ENCODE measurements at regions of chr10 and their contacts with region 1.

Region 1: DNA sequence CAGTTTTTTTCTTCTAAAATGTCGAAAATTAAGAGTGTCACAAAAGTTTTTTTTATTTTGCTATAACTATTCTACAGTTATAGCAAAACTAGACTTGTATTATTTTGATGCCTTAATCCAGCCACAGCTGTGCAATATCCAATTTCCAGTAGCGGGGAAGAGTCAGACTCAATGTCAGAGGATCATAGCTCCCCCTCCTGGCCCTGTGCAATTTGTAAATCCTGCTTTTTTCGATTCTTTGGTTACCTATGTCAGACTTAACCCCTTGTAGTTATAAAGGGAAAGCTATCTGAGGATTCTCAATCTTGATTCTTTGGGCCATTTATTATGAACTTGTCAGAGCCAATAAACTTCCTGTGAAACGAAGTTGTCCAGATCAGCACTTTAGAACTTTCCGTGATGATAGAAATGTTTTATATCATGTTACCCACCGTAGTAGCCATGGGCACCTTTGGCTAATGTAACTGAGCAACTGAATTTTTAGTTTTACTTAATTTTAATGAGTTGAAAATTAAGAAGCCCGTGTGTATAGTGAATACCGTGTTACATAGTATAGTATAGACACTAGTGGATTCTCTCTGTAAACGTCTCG is 87.7 kb upstream of the PRKCQ start:
- DNase-seq: peak; percentile 27 to 57 (median 41)
- ATAC-seq: peak; percentile 86
- H3K4me3 ChIP-seq: no peak overlapping the region
- H3K27ac ChIP-seq: no peak overlapping the region
- H3K4me1 ChIP-seq: no peaks in the 10 kb centered on the region
- H3K27me3 ChIP-seq: peaks cover 0 to 4% of the 10 kb centered on the region in 2 experiments; a peak in 3 of 5 replicates
- CTCF ChIP-seq: peak; percentile 68 to 77 (median 71)
- EP300 ChIP-seq: no peak
- POLR2A ChIP-seq: no peak
- RAD21 ChIP-seq: peak; percentile 76 to 86

Region 2: DNA sequence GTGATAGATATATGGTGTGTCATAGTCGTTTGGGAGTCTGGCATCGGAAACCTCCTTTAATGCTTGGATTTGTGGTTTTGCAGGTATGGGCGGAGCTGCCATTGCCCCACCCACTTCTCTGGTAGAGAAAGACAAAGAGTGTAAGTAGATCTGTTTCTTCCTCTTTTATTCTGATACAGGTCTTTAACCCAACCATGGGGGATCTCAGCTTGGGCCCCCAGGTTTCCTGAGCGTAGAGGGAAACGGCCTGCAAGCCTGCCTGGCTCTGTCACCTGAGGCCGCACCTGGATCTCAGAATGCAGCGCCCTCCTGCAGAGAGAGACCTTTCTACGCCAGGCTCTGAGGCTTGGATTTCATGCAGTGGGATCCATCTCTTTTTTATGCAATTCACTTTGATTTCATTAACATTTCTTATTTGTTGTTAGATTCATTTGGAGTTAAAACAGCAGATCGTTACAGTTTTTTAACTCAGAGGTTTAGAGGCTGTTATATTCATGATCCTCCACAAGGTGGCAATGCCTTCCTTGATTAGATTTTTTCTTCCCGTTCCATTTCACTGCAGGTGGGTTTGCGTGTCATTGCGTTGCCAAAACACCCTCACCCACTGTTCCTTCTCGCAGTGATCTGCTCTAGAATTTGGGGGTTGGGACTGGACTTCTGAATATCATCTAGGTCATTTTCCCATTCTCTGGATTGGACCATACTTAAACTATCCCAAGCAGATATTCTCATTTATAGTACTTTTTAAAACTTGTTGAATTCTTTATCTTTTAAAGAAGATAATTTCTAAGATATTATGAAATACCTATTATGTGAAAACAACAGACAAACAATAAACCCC is 559.0 kb before region 1 on chr10:
- CTCF ChIA-PET with region 1: no interaction called
- POLR2A ChIA-PET with region 1: no interaction called
- in situ Hi-C with region 1: loop called (anchors 25 kb)
- intact Hi-C with region 1: no loop called
- DNase-seq: peak; percentile 50 to 61 (median 53)
- ATAC-seq: peak; percentile 64
- H3K4me3 ChIP-seq: no peak overlapping the region
- H3K27ac ChIP-seq: no peak overlapping the region
- H3K4me1 ChIP-seq: no peaks in the 10 kb centered on the region; a peak in 1 of 5 replicates
- H3K27me3 ChIP-seq: no peaks in the 10 kb centered on the region
- CTCF ChIP-seq: peak; percentile 48 to 74 (median 59); a peak in 5 of 6 replicates
- EP300 ChIP-seq: no peak
- POLR2A ChIP-seq: no peak
- RAD21 ChIP-seq: peak; percentile 77

Region 3: GRCh38 chr10:6416892-6417512 is 250.8 kb before region 1 on chr10:
- CTCF ChIA-PET with region 1: interaction called, 29 read pairs
- POLR2A ChIA-PET with region 1: no interaction called
- in situ Hi-C with region 1: no loop called
- intact Hi-C with region 1: loop called (anchors 1 kb)
- DNase-seq: peak; percentile 44 to 69 (median 52)
- ATAC-seq: peak; percentile 88
- H3K4me3 ChIP-seq: no peak overlapping the region
- H3K27ac ChIP-seq: no peak overlapping the region
- H3K4me1 ChIP-seq: no peaks in the 10 kb centered on the region
- H3K27me3 ChIP-seq: peaks cover 2 to 13% of the 10 kb centered on the region in 2 experiments; a peak in 1 of 5 replicates
- CTCF ChIP-seq: peak; percentile 54 to 91 (median 67); a peak in 5 of 6 replicates
- EP300 ChIP-seq: no peak
- POLR2A ChIP-seq: no peak
- RAD21 ChIP-seq: peak; percentile 94 to 98

Region 4: GRCh38 chr10:6445501-6446316 is 222.1 kb before region 1 on chr10:
- CTCF ChIA-PET with region 1: interaction called, 11 read pairs
- POLR2A ChIA-PET with region 1: no interaction called
- in situ Hi-C with region 1: no loop called
- intact Hi-C with region 1: no loop called
- DNase-seq: peak; percentile 54 to 76 (median 58)
- ATAC-seq: peak; percentile 91
- H3K4me3 ChIP-seq: no peak overlapping the region
- H3K27ac ChIP-seq: peak overlapping the region; percentile 61; the same call in 2 of the 3 replicates
- H3K4me1 ChIP-seq: peaks cover 0 to 4% of the 10 kb centered on the region in 2 experiments; a peak in 2 of 5 replicates
- H3K27me3 ChIP-seq: no peaks in the 10 kb centered on the region
- CTCF ChIP-seq: peak; percentile 74 to 84 (median 81)
- EP300 ChIP-seq: no peak
- POLR2A ChIP-seq: no peak
- RAD21 ChIP-seq: peak; percentile 76 to 89

Region 5: DNA sequence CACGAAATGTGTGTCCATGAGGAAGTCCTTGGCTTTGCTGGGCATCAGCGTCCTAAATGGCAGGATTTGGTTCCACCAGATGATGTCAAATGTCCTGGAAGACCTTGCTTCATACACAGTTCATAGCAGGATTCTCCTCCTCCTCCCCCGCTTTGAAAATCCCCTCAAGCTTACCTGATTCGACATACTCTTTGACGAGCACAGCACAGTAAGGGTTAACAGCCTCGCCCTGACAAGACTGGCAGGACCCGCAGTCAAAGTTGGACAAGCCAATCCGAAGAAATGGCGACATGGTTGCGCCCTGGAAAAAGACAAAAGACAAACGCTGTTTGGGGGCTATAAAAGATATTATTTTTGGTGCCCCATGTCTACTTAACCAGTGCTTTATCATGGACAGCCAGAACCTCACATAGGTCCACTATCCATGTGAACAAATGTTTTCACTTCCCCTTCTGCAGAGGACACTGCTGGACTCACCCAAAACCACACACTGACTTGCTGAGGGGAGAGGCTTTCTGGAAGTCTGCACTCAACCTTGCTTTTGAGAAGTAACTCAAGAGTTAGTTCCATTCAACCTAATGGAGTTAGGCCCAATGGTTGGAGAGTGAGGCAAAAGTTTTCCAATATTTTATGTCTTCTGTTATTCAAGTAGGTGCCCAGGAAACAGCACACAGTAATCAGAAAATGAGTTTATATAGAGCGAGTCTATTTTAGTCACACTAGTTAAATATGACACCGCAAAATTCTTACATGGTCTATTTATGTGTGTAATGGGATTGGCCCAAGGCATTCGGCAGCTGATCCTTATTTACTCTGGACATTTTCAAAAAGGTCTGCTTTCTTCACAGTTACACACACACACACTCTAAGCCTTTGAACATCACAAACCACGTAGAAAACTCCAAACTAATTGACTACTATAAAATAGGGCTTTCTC is 152.7 kb before region 1 on chr10:
- CTCF ChIA-PET with region 1: no interaction called
- POLR2A ChIA-PET with region 1: interaction called, 3 read pairs
- in situ Hi-C with region 1: no loop called
- intact Hi-C with region 1: loop called (anchors 5 kb)
- DNase-seq: peak in 2 of 4 experiments; percentile 56 to 66
- ATAC-seq: peak; percentile 85
- H3K4me3 ChIP-seq: no peak overlapping the region
- H3K27ac ChIP-seq: peak overlapping the region; percentile 70
- H3K4me1 ChIP-seq: peaks cover 0 to 21% of the 10 kb centered on the region in 2 experiments; a peak in 4 of 5 replicates
- H3K27me3 ChIP-seq: no peaks in the 10 kb centered on the region; a peak in 1 of 5 replicates
- CTCF ChIP-seq: no peak
- EP300 ChIP-seq: peak; percentile 6; the same call in 1 of the 2 replicates
- POLR2A ChIP-seq: no peak
- RAD21 ChIP-seq: no peak; a peak in 1 of 4 replicates

Measured in K562 (cell line).